ENCODE measurements at regions of chr6 and their contacts with region 1.

Region 1: DNA sequence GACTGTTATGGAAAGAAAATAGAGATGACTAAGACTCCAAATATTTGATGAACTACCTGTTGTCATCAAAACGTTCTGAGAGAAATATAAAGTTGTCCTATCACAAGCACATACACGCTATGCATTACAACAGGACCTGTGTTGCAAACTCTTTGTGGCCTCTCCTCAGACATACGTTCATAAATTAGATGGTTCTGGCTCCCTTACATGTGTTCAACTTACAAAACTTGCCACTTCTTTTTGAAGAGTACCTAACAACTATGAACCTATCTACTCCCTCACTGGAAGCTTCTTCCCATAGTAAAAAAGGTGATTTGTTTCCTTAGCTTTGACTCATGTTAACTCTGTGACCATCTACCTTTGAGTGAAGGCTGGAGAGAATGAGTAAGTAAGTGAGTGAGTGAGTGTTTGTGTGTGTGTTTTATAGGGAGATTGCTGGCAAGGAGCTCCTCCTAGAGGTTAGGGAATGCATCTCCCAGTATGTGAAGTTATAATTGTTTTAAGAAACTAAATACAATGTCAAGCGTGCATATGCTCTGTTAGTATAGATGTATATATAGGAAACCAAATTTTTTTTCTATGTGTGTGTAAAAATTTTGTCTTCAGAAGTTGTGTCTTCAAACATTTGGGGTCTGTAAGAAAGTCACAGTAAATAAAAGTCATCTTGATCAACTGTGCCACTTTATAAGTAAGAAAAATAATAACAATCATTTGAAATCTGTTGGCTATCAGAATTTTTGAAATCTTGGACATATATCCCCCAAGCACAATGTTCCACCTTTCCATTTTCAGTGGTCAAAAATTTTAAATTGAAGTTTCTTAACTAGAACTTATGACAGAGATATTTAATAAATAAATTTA is 1211.1 kb upstream of the GJE1 start:
- DNase-seq: peak; percentile 86
- ATAC-seq: peak; percentile 77
- H3K4me3 ChIP-seq: no peak overlapping the region
- H3K27ac ChIP-seq: no peak overlapping the region
- H3K4me1 ChIP-seq: no peaks in the 10 kb centered on the region; the same call in 1 of the 2 replicates
- H3K27me3 ChIP-seq: no peaks in the 10 kb centered on the region
- CTCF ChIP-seq: peak; percentile 87
- POLR2A ChIP-seq: peak; percentile 34; the same call in 1 of the 2 replicates
- RAD21 ChIP-seq: peak; percentile 94

Region 2: DNA sequence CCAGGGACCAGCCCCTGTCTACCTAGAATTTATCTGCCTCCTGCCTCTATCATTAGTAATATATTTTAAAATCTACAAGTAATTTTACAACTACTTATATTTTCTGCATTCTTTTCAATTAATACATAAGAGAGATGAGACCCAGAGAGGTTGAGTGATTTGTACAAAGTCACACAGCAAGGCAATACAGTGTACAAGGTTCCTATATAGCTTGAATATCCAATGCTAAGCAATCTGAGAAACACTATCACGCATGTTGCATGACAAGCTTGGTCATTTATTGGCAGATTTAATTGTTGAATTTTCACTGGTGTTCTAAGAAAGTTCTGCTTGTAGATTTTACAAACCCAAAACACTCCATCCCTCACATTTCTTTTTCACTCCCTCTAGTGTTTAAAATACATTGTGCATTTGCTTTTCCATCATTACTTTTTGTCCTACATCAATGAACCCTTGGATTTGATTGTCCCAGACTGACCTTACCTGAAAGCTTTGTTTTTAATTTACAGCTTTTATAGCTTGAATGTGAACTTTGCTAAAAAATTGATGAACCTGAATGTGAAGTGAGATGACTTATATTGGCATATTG is 1026.3 kb before region 1 on chr6:
- CTCF ChIA-PET with region 1: no interaction called
- POLR2A ChIA-PET with region 1: no interaction called
- dilution Hi-C with region 1: no loop called
- in situ Hi-C with region 1: no loop called
- intact Hi-C with region 1: loop called (anchors 10 kb)
- DNase-seq: no peak
- ATAC-seq: no peak
- H3K4me3 ChIP-seq: no peak overlapping the region
- H3K27ac ChIP-seq: no peak overlapping the region
- H3K4me1 ChIP-seq: no peaks in the 10 kb centered on the region
- H3K27me3 ChIP-seq: no peaks in the 10 kb centered on the region
- CTCF ChIP-seq: no peak
- POLR2A ChIP-seq: no peak
- RAD21 ChIP-seq: no peak

Region 3: DNA sequence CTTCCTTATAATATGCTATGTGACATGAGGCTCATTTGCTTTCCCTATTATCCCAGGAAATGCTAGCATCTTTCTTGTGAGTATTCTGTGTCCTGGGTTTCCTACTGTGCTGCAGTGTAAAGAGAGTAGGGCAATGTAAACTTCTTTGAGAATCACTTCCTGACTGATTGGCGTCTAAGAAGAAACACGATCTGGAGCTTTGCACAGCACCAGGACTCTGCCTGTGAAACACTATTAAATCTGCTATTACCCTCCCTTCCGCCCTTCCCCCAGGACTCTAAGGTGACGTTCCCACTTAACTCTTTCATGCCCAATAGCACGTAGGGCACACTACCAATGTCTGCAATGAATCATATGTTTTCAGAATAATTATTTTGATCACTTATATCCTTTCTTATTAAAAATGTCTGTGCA is 939.8 kb before region 1 on chr6:
- CTCF ChIA-PET with region 1: interaction called, 3 read pairs
- POLR2A ChIA-PET with region 1: no interaction called
- dilution Hi-C with region 1: no loop called
- in situ Hi-C with region 1: no loop called
- intact Hi-C with region 1: loop called (anchors 1 kb)
- DNase-seq: peak; percentile 80
- ATAC-seq: peak; percentile 62
- H3K4me3 ChIP-seq: no peak overlapping the region
- H3K27ac ChIP-seq: peak overlapping the region; percentile 49; the same call in 1 of the 2 replicates
- H3K4me1 ChIP-seq: peaks cover 29% of the 10 kb centered on the region
- H3K27me3 ChIP-seq: no peaks in the 10 kb centered on the region
- CTCF ChIP-seq: no peak
- POLR2A ChIP-seq: no peak
- RAD21 ChIP-seq: no peak

Region 4: DNA sequence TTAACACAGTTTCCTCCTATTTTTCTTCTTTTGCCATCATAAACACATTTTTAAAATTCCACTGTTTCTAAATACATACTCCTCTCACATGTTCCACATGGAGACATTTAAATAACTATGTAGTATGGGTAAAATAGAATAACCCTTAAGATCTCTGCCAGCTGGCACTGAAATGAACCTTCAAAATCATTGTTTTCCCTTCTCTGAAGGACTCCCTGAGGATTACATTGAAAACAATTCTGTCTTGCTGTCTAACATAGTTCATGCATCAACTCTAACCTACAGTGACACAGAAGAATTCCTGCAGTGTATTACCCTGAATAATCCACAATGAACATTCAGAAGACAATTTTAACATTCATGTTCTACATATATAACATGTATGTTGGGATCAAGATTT is 185.4 kb before region 1 on chr6:
- CTCF ChIA-PET with region 1: no interaction called
- POLR2A ChIA-PET with region 1: no interaction called
- dilution Hi-C with region 1: no loop called
- in situ Hi-C with region 1: no loop called
- intact Hi-C with region 1: loop called (anchors 2 kb)
- DNase-seq: no peak
- ATAC-seq: peak; percentile 37
- H3K4me3 ChIP-seq: no peak overlapping the region
- H3K27ac ChIP-seq: no peak overlapping the region
- H3K4me1 ChIP-seq: no peaks in the 10 kb centered on the region
- H3K27me3 ChIP-seq: no peaks in the 10 kb centered on the region
- CTCF ChIP-seq: no peak
- POLR2A ChIP-seq: no peak
- RAD21 ChIP-seq: no peak

Region 5: DNA sequence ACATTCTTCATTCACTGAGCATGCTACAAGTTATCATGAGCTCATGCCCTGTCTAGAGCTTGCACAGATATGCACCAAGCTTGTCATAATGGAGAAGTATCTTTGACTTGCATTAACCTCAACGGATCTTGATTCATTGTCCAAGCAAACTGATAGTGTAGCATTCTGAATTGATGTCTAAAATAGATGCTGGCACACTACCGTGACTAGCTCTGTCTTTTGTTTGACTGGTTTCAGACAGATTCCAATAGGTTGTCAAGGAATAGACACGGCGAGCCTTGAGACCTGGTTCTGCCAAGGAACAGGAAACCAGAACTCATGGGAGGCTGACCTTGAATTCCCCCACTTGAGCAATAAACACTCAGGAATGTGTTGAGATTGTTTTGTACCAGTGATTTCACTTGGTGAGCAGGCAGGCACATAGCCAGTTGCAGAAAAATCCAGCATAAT is 58.1 kb after region 1 on chr6:
- CTCF ChIA-PET with region 1: no interaction called
- POLR2A ChIA-PET with region 1: no interaction called
- dilution Hi-C with region 1: no loop called
- in situ Hi-C with region 1: no loop called
- intact Hi-C with region 1: no loop called
- DNase-seq: peak; percentile 89
- ATAC-seq: peak; percentile 80
- H3K4me3 ChIP-seq: no peak overlapping the region
- H3K27ac ChIP-seq: peak overlapping the region; percentile 36; the same call in 1 of the 2 replicates
- H3K4me1 ChIP-seq: peaks cover 6% of the 10 kb centered on the region; the same call in 1 of the 2 replicates
- H3K27me3 ChIP-seq: no peaks in the 10 kb centered on the region
- CTCF ChIP-seq: no peak
- POLR2A ChIP-seq: no peak
- RAD21 ChIP-seq: no peak

Region 6: GRCh38 chr6:141041596-141042087 is 120.0 kb after region 1 on chr6:
- CTCF ChIA-PET with region 1: no interaction called
- POLR2A ChIA-PET with region 1: no interaction called
- dilution Hi-C with region 1: no loop called
- in situ Hi-C with region 1: no loop called
- intact Hi-C with region 1: no loop called
- DNase-seq: no peak
- ATAC-seq: no peak
- H3K4me3 ChIP-seq: no peak overlapping the region
- H3K27ac ChIP-seq: no peak overlapping the region
- H3K4me1 ChIP-seq: no peaks in the 10 kb centered on the region
- H3K27me3 ChIP-seq: no peaks in the 10 kb centered on the region
- CTCF ChIP-seq: no peak
- POLR2A ChIP-seq: no peak
- RAD21 ChIP-seq: no peak